ENCODE measurements at regions of chr17 and their contacts with region 1.

Region 1: GRCh38 chr17:50564916-50565315 is 4.4 kb downstream of the CACNA1G start:
- DNase-seq: peak; percentile 56
- ATAC-seq: peak; percentile 31
- H3K4me3 ChIP-seq: no peak overlapping the region
- H3K27ac ChIP-seq: no peak overlapping the region
- H3K4me1 ChIP-seq: peaks cover 7% of the 10 kb centered on the region; the same call in 1 of the 2 replicates
- H3K27me3 ChIP-seq: peaks cover 83% of the 10 kb centered on the region
- CTCF ChIP-seq: no peak
- POLR2A ChIP-seq: no peak
- RAD21 ChIP-seq: no peak

Region 2: DNA sequence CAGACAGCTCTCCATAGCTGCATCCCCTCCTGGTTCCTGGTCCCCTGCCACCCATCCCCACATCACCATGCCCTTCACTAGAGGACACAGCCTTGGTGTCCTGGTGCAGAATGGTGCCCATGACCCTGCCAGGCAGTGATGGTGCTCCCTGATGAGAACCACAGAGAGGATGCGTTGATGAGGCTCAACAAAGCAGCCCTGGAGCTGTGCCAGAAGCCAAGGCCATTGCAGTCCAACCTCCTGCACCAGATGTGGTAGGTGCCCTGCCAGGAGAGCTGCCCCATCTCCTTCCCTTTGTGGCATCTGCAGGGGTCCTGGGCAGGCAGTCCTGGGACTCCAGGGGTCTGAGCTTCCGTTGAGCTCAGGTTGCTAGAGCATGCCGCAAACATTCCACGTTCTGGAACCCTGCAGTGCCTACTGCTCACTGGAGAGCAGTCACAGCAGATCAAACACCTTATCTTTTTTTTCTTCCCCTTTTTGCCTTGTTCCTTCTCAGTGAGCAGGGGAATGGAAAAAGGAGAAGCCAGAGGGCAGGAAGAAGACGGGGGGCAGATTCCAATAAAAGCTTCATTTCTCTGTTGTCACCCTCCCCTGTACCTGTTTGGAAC is 37.7 kb before region 1 on chr17:
- CTCF ChIA-PET with region 1: no interaction called
- POLR2A ChIA-PET with region 1: no interaction called
- dilution Hi-C with region 1: no loop called
- in situ Hi-C with region 1: no loop called
- intact Hi-C with region 1: no loop called
- DNase-seq: no peak
- ATAC-seq: no peak
- H3K4me3 ChIP-seq: no peak overlapping the region
- H3K27ac ChIP-seq: no peak overlapping the region
- H3K4me1 ChIP-seq: no peaks in the 10 kb centered on the region
- H3K27me3 ChIP-seq: peaks cover 60% of the 10 kb centered on the region
- CTCF ChIP-seq: no peak
- POLR2A ChIP-seq: no peak
- RAD21 ChIP-seq: no peak

Region 3: DNA sequence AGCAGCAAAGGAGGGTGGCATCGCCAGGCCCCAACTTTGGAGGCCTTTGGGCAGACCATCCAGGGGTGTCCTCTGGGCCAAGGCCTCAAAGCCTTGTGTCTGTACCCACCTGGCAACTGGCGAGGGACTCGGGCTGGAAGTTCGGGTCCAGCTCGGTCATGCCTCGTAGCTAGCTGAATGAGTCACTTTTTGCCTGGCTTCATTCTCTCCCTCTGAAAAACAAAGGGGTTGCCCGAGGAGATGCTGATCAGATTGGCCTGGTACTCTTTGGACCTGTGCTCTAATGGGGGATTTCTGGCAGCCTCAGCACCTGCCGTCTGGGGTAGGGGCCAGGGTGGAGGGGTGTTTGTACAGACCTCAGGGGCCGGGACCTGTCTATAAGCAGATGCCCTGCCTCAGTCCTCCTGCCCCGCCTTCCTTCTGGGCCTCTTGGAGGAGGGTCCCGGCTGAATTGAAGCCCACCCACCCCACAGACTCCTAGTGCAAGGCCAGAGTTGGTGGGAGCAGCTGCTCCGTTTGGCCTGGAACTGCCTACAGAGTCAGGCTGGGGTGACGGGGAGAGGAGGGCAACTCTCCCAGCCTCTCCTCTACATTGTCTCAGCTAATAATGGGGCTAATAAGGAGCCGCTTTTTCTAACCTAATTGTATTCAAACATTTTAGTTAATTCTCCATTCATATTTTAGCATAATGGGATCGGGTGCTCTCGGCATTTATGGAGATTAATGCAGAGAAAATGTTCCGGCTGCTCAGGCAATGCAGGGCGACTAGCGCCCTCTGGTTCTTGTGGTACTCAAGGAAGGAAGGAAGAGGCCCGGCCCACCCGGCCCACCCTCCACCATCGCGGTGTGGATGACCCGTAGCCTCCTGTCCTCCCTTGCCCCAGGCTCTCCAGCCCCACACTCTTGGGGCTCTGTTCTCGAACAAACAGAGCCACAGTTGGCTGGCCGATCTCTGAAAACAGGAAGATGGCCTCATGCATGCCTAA is 48.4 kb after region 1 on chr17:
- CTCF ChIA-PET with region 1: no interaction called
- POLR2A ChIA-PET with region 1: no interaction called
- dilution Hi-C with region 1: no loop called
- in situ Hi-C with region 1: loop called (anchors 5 kb)
- intact Hi-C with region 1: no loop called
- DNase-seq: no peak
- ATAC-seq: no peak
- H3K4me3 ChIP-seq: no peak overlapping the region
- H3K27ac ChIP-seq: no peak overlapping the region
- H3K4me1 ChIP-seq: peaks cover 4% of the 10 kb centered on the region; the same call in 1 of the 2 replicates
- H3K27me3 ChIP-seq: peaks cover 17% of the 10 kb centered on the region; the same call in 1 of the 2 replicates
- CTCF ChIP-seq: no peak
- POLR2A ChIP-seq: no peak
- RAD21 ChIP-seq: no peak

Region 4: GRCh38 chr17:50668025-50668837 is 103.3 kb after region 1 on chr17:
- CTCF ChIA-PET with region 1: no interaction called
- POLR2A ChIA-PET with region 1: no interaction called
- dilution Hi-C with region 1: no loop called
- in situ Hi-C with region 1: no loop called
- intact Hi-C with region 1: no loop called
- DNase-seq: peak; percentile 41
- ATAC-seq: peak; percentile 52; the same call in 1 of the 2 replicates
- H3K4me3 ChIP-seq: no peak overlapping the region
- H3K27ac ChIP-seq: peak overlapping the region; percentile 48
- H3K4me1 ChIP-seq: peaks cover 21% of the 10 kb centered on the region
- H3K27me3 ChIP-seq: no peaks in the 10 kb centered on the region
- CTCF ChIP-seq: no peak
- POLR2A ChIP-seq: no peak
- RAD21 ChIP-seq: no peak

Measured in IMR-90 (cell line).